Ascending aorta (tissue), 2 donors: ENCODE measurements at regions of chr20 and their contacts with region 1.

Region 1: DNA sequence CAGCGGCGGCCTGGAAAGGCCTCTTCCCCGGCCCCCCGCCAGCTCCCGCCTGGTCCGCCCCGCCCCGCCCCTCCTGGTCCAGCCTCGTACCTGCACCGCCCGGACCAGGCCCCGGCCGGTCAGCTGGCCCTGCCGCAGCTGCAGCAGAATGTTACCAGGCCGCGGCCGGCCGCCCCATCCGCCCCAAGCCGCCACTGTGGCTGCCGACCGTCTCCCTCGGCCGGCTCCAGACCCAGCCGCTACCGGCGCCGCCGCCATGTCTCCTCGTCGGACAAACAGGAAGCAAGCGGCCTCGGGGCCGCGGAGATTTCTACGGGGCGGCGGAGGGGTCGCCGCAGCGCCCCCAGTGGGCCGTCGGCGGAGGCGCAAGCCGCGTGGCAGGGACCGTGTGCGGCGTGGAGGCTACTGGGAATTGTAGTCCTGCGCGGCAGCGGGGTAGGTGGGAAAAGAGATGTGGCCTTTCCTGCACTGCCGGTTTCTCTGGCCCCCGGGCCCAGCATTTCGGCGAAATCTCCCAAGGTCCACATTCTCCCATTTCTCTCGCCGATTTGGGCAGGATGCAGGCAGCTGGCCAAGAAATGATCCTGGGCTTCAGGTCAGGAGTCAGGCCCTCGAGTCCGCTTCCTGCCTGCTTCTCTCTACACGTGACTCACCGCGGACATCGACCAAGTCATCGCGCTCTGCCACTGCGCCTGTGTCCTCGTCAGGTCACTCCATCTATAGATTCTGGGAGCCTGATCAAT is at the start of gene TRPC4AP:
- DNase-seq: peak; percentile 49 to 93
- H3K4me3 ChIP-seq: peak within 1 kb of the TSS; percentile 95 to 99
- H3K27ac ChIP-seq: peak within 1 kb of the TSS; percentile 97
- H3K4me1 ChIP-seq: peaks cover 0 to 25% of the 10 kb centered on the region in 2 donors
- H3K27me3 ChIP-seq: no peaks in the 10 kb centered on the region
- CTCF ChIP-seq: peak; percentile 95 to 99 (median 98)
- total RNA-seq, gene TRPC4AP: 54.1 TPM

Region 2: GRCh38 chr20:34806255-34806654 is 286.4 kb before region 1 on chr20:
- intact Hi-C with region 1: no loop called
- DNase-seq: no peak
- H3K4me3 ChIP-seq: no peak overlapping the region
- H3K27ac ChIP-seq: no peak overlapping the region
- H3K4me1 ChIP-seq: no peaks in the 10 kb centered on the region
- H3K27me3 ChIP-seq: no peaks in the 10 kb centered on the region
- CTCF ChIP-seq: no peak

Region 3: DNA sequence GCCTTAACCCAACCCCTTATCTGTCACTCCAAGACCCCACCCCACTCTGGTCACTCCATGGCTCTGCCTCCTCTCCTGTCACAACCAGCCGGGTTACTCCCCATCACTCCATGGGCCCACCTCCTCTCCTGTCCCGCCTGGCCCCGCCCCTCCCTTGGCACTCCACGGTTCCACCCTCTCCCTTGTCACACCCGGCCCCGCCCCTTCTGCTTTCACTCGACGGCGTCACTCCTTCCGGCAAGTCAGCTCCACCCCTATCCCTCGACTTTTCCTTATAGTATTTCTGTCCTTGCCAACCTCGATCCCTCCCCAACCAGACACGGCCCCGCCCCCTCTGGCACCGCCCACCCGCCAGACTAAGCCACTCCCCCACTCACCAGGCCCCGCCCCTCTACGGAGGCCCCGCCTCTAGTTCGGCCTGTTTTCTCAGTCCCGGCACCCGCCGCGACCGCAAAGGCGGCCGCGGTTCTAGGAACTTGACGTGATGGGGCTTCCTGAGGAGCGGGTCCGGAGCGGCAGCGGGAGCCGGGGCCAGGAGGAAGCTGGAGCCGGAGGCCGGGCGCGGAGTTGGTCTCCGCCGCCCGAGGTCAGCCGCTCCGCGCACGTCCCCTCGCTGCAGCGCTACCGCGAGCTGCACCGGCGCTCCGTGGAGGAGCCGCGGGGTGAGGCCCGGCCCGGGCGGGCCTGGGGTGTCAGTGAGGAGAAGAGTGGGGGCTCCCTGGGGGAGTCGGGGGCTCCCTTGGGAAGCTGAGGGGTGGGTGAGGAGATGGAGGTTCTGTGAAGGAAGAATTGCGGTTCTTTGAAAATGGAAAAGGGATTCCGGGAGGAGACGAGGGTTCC is 216.3 kb before region 1 on chr20 and contains the start of gene ACSS2:
- intact Hi-C with region 1: loop called (anchors 1 kb)
- DNase-seq: peak; percentile 98 to 100
- H3K4me3 ChIP-seq: peak within 1 kb of the TSS; percentile 97 to 99
- H3K27ac ChIP-seq: peak within 1 kb of the TSS; percentile 91 to 97
- H3K4me1 ChIP-seq: peaks cover 0 to 22% of the 10 kb centered on the region in 2 donors
- H3K27me3 ChIP-seq: no peaks in the 10 kb centered on the region
- CTCF ChIP-seq: no peak
- total RNA-seq, gene ACSS2: 156 TPM

Region 4: GRCh38 chr20:35013421-35014411 is 79.0 kb before region 1 on chr20:
- intact Hi-C with region 1: loop called (anchors 5 kb)
- DNase-seq: peak in 1 of 2 donors; percentile 37
- H3K4me3 ChIP-seq: no peak overlapping the region
- H3K27ac ChIP-seq: peak overlapping the region in 1 of 2 donors; percentile 29
- H3K4me1 ChIP-seq: peaks cover under 1 to 10% of the 10 kb centered on the region in 2 donors
- H3K27me3 ChIP-seq: no peaks in the 10 kb centered on the region
- CTCF ChIP-seq: no peak

Region 5: GRCh38 chr20:35146920-35147574 is 54.4 kb after region 1 on chr20 and contains the start of gene EDEM2:
- intact Hi-C with region 1: loop called (anchors 2 kb)
- DNase-seq: peak; percentile 73 to 96
- H3K4me3 ChIP-seq: peak within 1 kb of the TSS; percentile 63 to 64
- H3K27ac ChIP-seq: peak within 1 kb of the TSS; percentile 61 to 70
- H3K4me1 ChIP-seq: peaks cover 0 to 12% of the 10 kb centered on the region in 2 donors
- H3K27me3 ChIP-seq: no peaks in the 10 kb centered on the region
- CTCF ChIP-seq: no peak
- total RNA-seq, gene EDEM2: 20.3 TPM